Head of caudate nucleus (tissue), 42 donors: ENCODE measurements at regions of chr7 and their contacts with region 1.

Region 1: DNA sequence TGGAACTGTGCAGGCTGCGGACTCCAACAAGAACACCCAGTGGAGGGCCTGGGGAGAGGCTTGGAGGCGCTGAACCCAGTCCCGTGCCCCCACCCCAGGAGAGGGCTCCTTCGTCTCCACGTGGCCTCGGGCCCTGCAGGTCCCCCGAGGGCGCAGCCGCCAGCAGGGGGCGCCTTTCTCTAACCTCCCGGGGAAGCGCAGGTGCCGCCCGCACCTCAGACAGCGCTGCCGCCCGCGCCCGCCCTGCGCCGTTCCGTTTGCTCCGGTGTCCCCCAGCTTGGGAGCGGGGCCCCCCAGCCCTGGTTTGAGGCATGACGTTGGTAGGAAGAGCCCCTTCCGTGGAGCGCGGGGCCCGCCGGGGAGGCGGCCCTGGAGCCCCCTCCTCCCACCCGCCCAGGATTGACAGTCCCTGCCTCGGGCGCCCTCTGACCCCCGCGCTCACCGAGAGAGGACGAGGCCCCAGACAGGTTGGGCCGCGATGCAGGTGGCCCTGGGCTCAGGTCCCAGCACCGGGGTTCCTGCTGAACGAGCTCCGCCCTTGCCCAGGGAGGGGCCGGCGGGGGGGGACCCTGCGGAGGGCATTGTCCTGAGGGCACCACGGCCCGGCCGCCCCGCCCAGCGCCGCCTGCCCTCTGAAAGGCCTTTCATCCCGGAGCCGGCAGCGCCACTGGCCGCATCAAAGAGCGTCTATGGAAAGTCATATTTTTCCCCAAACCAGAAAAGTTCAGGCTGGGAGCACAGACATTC is 42.8 kb downstream of the FOXL3 start:
- DNase-seq: peak; percentile 63 to 95 (median 86)

Region 2: GRCh38 chr7:353746-354325 is 21.0 kb after region 1 on chr7:
- intact Hi-C with region 1: no loop called
- DNase-seq: peak in 40 of 42 donors; percentile 9 to 86 (median 56)

Region 3: DNA sequence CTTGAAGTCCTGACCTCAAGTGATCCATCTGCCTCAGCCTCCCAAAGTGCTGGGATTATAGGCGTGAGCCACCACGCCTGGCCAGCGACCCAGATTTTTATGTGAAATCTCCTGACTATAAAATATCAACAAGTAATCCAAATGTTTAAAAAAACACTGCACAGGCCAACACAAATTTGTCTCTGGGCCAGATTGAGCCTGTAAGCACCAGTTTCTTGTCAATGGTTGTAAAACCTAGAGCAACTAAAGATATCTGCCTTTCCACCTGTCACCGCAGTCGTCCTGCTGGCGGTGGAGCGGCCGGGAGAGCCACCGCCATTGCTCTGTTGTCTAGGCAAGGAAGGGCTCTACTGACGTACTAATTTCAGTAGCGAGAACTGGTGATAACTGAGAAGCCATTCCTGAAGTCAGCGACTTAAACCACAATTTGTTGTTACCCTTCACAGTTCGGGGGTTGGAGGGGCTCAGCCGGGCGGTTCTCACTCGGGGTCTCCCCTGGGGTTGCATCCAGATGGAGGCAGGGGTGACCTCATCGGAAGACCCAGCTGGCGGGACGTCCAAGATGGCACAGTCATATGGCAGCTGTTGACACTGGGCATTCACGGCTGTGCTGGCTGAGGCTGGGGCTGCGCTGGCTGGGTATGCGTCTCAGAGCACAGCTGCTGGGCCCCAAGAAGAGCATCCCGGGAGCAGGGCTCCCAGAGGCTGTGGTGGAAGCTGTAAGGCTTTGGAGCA is 242.0 kb after region 1 on chr7:
- intact Hi-C with region 1: no loop called
- DNase-seq: peak in 13 of 42 donors; percentile 11 to 56 (median 35)

Region 4: DNA sequence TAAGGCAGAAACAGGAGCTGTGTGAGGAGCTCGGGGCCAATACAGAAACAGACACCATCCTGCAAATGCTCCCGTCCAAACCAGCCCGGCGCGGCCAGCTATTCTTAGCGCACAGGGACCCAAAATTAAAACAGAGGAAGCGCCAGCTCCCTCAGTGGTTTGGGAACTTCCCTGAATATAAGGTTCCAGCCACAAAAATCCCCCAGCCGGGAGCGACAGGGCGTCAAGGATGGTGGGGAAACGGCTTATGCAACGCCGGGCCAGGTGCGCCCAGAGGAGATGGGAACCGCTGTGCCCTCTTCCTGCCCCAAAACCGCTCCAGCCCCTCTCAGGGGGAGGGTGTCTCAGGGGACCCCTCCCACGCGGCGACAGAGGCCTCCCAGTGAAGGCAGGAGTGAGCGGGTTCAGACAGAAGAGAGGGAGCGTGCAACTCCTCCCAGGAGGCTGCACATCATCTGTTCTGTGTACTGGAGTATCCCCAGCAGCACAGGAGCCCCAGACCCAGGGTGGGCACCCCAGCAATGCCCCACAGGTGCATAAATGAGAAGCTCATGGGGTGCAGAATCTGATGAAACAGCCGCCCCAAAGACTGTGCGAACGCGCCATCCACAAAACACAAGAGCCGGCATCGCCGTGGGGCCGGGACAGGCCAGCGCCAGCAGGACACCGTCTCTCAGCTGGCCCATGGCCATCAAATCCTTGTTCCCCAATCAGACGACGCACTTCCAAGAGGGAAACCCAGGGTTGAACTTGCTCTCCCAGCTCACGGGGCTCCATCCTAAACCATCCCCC is 260.7 kb after region 1 on chr7:
- intact Hi-C with region 1: loop called (anchors 10 kb)
- DNase-seq: peak in 3 of 42 donors; percentile 13 to 45 (median 24)